Ovary (tissue), 10 donors: ENCODE measurements at regions of chr19 and their contacts with region 1.

Region 1: GRCh38 chr19:38250821-38251563 is 5.2 kb downstream of the PPP1R14A start:
- DNase-seq: peak; percentile 94 to 98 (median 97)
- H3K4me3 ChIP-seq: peak overlapping the region; percentile 11
- H3K27ac ChIP-seq: peak overlapping the region; percentile 59 to 88
- H3K4me1 ChIP-seq: peaks cover 27% of the 10 kb centered on the region
- H3K27me3 ChIP-seq: no peaks in the 10 kb centered on the region
- CTCF ChIP-seq: no peak
- EP300 ChIP-seq: no peak
- POLR2A ChIP-seq: no peak

Region 2: DNA sequence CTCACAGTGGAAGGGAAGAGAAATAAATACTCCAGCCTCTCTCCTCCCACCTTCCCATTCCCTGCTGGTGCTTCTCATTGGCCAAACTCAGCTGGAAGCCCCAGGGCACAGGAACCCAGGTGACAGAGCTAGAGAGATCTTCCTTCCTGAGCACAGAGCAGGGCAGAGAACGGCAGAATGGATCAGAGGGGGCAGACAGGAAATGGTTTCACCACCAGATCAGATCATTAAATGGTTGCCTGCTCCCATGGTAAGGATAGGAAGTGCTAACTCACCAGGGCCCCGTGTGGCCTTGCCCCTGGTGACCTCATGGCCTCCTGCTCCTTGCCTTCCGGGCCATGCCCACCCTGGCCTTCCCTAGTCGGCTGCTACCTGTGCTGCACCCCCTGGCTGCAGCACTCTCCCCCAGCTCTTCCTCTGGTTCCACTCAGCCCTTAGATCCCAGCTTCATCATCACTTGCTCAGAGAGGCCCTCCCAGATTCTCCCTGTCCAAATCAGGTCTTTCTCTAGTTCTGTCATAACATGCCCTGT is 135.7 kb before region 1 on chr19:
- intact Hi-C with region 1: no loop called
- DNase-seq: no peak
- H3K4me3 ChIP-seq: no peak overlapping the region
- H3K27ac ChIP-seq: no peak overlapping the region
- H3K4me1 ChIP-seq: no peaks in the 10 kb centered on the region
- H3K27me3 ChIP-seq: no peaks in the 10 kb centered on the region
- CTCF ChIP-seq: no peak
- EP300 ChIP-seq: no peak
- POLR2A ChIP-seq: no peak

Region 3: GRCh38 chr19:38315657-38316476 is 64.9 kb after region 1 on chr19 and contains the start of gene YIF1B:
- intact Hi-C with region 1: loop called in 3 of 4 experiments (anchors 5 kb)
- DNase-seq: peak; percentile 94 to 96 (median 96)
- H3K4me3 ChIP-seq: peak within 1 kb of the TSS; percentile 47
- H3K27ac ChIP-seq: peak within 1 kb of the TSS; percentile 43 to 85
- H3K4me1 ChIP-seq: peaks cover 1% of the 10 kb centered on the region
- H3K27me3 ChIP-seq: no peaks in the 10 kb centered on the region
- CTCF ChIP-seq: no peak
- EP300 ChIP-seq: no peak
- POLR2A ChIP-seq: no peak
- total RNA-seq, gene YIF1B: 8.5 to 37.2 (median 21.8) TPM